H1 (cell line): ENCODE measurements at regions of chr5 and their contacts with region 1.

Region 1: DNA sequence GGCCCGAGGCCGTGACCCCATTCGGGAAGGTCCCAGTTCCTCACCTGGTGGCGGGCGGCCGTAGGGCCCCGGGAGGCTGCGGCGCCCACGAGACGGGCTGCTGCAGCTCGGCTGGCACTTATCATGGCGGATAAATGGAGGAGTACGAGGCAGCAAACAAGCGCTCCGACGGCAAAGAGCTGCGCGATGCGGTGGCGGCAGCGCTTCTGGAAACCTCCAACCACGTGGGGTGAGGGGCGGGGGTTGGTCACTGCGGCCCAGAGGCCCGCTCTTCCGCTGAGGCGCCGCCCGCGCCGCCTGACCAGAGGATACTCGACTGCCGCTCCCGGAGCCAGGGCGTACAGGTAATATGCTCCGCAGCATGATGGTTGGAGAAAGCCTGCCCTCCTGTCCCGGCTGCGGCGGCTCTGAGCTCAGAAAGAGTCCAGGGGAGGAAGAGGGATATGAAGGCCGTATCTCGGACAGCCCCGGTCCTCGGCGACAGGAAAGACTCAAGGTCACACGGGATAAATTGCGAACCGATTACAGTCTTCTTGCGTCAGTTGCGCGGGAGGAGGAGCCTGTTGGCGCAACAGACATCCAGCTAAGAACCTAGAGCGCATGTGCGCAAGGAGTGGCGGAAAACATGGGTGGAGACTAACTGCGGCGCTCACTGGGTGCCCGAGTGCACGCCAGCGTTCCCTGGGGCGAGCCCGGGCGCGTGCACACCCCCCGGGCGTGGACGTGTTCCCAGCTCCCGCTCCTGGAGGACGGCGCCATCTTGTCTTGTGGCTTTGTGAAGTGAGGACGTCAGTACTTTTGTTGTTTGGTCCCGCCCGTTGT is at the start of gene HSPA9:
- DNase-seq: peak; percentile 95 to 97
- H3K4me3 ChIP-seq: peak within 1 kb of the TSS; percentile 82 to 98 (median 92)
- H3K27ac ChIP-seq: peak within 1 kb of the TSS; percentile 100
- H3K4me1 ChIP-seq: peaks cover 0 to 3% (median 0%) of the 10 kb centered on the region in 4 experiments; a peak in 3 of 7 replicates
- H3K27me3 ChIP-seq: no peaks in the 10 kb centered on the region
- CTCF ChIP-seq: no peak
- EP300 ChIP-seq: peak in 1 of 2 experiments; percentile 30; a peak in 1 of 3 replicates
- POLR2A ChIP-seq: peak; percentile 80 to 87
- RAD21 ChIP-seq: no peak
- total RNA-seq, gene HSPA9: 395 and 396 TPM in 2 replicates

Region 2: DNA sequence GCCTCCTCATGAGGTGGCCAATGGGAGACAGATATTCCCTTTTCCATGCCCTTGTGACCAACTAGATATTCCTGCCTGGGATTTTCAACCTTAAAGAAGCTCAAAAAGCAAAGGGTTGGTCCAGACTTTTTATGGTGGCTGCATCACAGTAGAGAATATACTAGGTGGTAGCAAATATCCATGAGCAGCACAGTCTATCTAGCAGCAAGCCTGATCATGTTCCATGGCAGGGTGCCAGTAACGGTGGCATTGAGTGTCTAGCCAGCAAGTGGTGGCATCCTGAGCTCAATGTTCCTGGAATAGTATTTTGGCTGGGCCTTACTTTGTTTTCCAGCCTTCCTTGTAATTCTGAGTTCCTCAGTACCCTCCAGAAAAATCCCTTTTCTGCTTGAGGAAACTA is 269.6 kb before region 1 on chr5:
- CTCF ChIA-PET with region 1: no interaction called
- POLR2A ChIA-PET with region 1: no interaction called
- DNase-seq: no peak
- H3K4me3 ChIP-seq: no peak overlapping the region
- H3K27ac ChIP-seq: no peak overlapping the region
- H3K4me1 ChIP-seq: no peaks in the 10 kb centered on the region
- H3K27me3 ChIP-seq: no peaks in the 10 kb centered on the region
- CTCF ChIP-seq: no peak
- EP300 ChIP-seq: no peak
- POLR2A ChIP-seq: no peak
- RAD21 ChIP-seq: no peak

Region 3: GRCh38 chr5:138536665-138537315 is 38.6 kb before region 1 on chr5:
- CTCF ChIA-PET with region 1: no interaction called
- POLR2A ChIA-PET with region 1: interaction called, 1,018 read pairs
- DNase-seq: peak in 1 of 2 experiments; percentile 43
- H3K4me3 ChIP-seq: no peak overlapping the region
- H3K27ac ChIP-seq: no peak overlapping the region
- H3K4me1 ChIP-seq: peaks cover 0 to 7% (median 0%) of the 10 kb centered on the region in 4 experiments; a peak in 2 of 7 replicates
- H3K27me3 ChIP-seq: no peaks in the 10 kb centered on the region
- CTCF ChIP-seq: peak; percentile 18 to 62 (median 41)
- EP300 ChIP-seq: no peak
- POLR2A ChIP-seq: peak in 1 of 2 experiments; percentile 74; a peak in 1 of 3 replicates
- RAD21 ChIP-seq: no peak

Region 4: GRCh38 chr5:138594305-138595058 is 19.1 kb after region 1 on chr5:
- CTCF ChIA-PET with region 1: interaction called, 40 read pairs
- POLR2A ChIA-PET with region 1: interaction called, 56 read pairs
- DNase-seq: no peak
- H3K4me3 ChIP-seq: no peak overlapping the region
- H3K27ac ChIP-seq: no peak overlapping the region
- H3K4me1 ChIP-seq: no peaks in the 10 kb centered on the region
- H3K27me3 ChIP-seq: no peaks in the 10 kb centered on the region
- CTCF ChIP-seq: peak in 2 of 3 experiments; percentile 29 to 56; a peak in 2 of 4 replicates
- EP300 ChIP-seq: no peak
- POLR2A ChIP-seq: no peak
- RAD21 ChIP-seq: peak; percentile 8 to 19; a peak in 1 of 4 replicates

Region 5: DNA sequence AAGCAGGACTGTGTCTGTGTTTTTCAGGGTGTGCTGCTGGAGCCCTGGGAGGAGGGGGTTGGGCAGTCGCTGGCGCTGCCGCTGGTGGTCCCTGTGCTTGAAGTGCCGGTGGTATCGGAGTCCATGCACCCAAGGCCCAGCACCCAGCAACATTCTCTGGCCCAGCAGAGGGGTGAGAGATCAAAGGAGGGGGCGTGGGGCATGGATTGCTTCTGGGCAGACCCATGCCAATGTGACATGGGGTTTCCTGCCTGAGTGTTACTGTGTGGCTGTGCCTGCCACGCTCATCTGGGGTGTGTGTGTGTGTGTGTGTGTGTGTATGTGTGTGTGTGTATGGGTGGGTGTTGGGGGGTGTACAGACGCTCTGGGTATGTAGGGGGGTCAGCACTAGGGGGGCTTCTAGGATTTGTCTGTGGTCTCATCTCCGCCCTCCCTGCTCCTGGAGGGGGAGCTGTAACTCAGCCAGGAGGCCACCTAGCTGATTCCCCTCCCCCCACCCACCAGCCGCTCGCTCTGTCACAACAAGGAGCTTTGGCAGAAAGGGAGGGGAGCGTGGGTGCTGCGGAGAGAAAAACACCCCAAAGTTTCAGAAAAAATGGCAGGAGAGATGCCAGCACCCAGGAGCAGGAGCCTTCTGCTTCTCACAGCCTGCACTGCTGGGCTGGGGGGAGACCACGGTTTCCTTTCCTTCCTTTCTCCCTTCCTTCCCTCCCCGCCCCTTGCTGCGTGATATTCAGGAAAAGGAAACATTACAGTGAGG is 35.7 kb after region 1 on chr5:
- CTCF ChIA-PET with region 1: interaction called, 17 read pairs
- POLR2A ChIA-PET with region 1: interaction called, 25 read pairs
- DNase-seq: peak in 1 of 2 experiments; percentile 72
- H3K4me3 ChIP-seq: peak overlapping the region; percentile 33 to 69 (median 64)
- H3K27ac ChIP-seq: peak overlapping the region; percentile 56
- H3K4me1 ChIP-seq: peaks cover 3 to 21% (median 16%) of the 10 kb centered on the region in 4 experiments
- H3K27me3 ChIP-seq: no peaks in the 10 kb centered on the region
- CTCF ChIP-seq: peak; percentile 36 to 52 (median 41)
- EP300 ChIP-seq: peak in 1 of 2 experiments; percentile 27; a peak in 1 of 3 replicates
- POLR2A ChIP-seq: no peak
- RAD21 ChIP-seq: peak; percentile 35 to 53; a peak in 3 of 4 replicates

Region 6: DNA sequence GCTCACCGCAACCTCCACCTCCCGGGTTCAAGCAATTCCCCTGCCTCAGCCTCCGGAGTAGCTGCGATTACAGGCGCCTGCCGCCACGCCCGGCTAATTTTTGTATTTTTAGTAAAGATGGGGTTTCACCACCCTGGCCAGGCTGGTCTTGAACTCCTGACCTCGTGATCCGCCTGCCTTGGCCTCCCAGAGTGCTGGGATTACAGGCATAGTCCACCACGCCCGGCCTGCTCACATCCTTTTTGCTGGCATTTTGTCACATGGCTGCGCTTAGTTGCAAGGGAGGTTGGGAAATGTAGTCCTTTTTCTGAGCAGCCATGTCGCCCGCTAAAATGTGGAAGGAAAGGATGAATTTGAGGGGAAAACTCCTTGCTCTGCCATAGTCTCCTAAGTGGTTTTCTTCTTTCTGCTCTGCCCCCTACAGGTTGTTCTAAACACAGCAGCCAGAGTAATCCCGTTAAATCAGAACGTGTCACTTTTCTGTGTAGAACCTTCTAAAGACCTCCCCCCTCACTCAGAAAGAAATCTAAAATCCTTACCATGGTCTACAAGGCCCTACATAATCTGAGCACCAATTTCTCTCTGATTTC is 57.6 kb after region 1 on chr5:
- CTCF ChIA-PET with region 1: interaction called, 12 read pairs
- POLR2A ChIA-PET with region 1: interaction called, 7 read pairs
- DNase-seq: peak; percentile 75 to 87
- H3K4me3 ChIP-seq: no peak overlapping the region
- H3K27ac ChIP-seq: no peak overlapping the region
- H3K4me1 ChIP-seq: no peaks in the 10 kb centered on the region; a peak in 1 of 7 replicates
- H3K27me3 ChIP-seq: no peaks in the 10 kb centered on the region
- CTCF ChIP-seq: peak in 2 of 3 experiments; percentile 68 to 80; a peak in 3 of 4 replicates
- EP300 ChIP-seq: no peak
- POLR2A ChIP-seq: no peak
- RAD21 ChIP-seq: peak; percentile 57 to 72

Region 7: DNA sequence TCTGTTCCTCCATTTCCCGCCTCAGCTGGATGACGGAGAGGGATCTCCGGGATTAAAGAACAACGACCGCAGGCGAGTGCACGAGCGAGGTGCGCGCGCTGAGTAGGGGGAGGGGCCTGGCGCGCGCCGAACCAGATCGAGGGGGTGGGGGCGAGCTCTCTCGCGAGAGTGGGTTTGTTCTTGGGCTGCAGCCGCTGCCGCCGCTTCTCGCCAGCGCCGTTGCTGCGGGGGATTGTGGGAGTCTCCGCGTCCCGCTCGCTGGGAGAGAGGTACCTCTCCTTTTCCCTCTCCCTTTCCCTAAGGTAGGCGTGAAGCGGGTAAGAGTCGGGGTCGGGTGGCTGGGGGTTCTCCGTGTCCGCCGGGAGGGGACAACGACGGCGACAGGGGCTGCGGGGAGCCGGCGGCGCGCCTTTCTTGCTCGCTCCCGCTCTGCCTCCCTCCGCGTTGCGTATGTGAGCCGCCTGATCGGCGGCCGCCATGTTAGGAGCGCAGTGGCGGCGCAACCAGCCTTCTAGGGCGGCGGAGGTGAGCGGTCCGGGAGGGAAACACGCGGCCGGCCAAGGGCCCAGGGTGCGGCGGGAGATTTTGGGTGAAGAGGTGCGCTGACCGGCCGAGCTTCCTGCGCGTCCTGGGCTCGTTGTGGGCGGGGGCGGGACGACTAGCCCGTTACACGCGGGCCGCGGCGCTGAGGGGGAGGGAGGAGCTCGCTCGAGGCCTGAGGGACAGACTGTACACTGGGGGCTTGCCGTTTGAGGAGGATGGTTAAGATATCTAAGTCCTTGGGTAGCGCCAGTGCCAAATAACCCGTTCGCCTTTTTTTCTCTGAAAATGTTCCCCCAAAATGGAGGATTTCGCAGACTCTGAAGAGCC is 718.3 kb after region 1 on chr5 and contains the start of gene MATR3:
- CTCF ChIA-PET with region 1: no interaction called
- POLR2A ChIA-PET with region 1: interaction called, 19 read pairs
- DNase-seq: peak; percentile 91 to 95
- H3K4me3 ChIP-seq: peak within 1 kb of the TSS; percentile 83 to 99 (median 95)
- H3K27ac ChIP-seq: peak within 1 kb of the TSS; percentile 98
- H3K4me1 ChIP-seq: peaks cover 0 to 25% (median 7%) of the 10 kb centered on the region in 4 experiments; a peak in 5 of 7 replicates
- H3K27me3 ChIP-seq: no peaks in the 10 kb centered on the region
- CTCF ChIP-seq: no peak
- EP300 ChIP-seq: no peak
- POLR2A ChIP-seq: peak; percentile 97 to 99
- RAD21 ChIP-seq: no peak
- total RNA-seq, gene MATR3: 378 and 389 TPM in 2 replicates